GM10248 (cell line): ENCODE measurements at regions of chr3 and their contacts with region 1.

Region 1: GRCh38 chr3:79086514-79086913 is 681.3 kb downstream of the ROBO1 start:
- DNase-seq: peak; percentile 29
- CTCF ChIP-seq: peak; percentile 86

Region 2: DNA sequence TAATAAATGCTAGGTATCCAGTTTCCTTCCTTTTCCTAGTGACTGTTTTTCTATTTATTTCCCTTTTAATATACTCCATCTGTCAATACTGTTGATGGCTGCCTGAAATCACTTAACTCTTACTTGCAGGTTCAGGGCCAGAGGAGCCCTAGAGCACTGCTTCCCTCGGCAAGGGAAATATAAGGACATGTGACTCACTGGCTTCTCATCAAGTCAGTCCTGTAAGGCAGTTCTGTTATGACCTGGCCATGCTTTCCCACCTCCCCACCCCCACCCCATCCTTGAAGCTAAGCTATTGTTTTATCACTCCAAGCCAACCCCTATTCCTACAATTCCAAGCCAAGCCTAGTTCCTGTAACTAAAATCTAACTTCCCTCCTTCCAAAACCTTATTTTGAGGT is 119.5 kb before region 1 on chr3:
- CTCF ChIA-PET with region 1: no interaction called
- POLR2A ChIA-PET with region 1: no interaction called
- DNase-seq: no peak
- CTCF ChIP-seq: no peak

Region 3: GRCh38 chr3:79097964-79098660 is 11.6 kb after region 1 on chr3:
- CTCF ChIA-PET with region 1: interaction called, 14 read pairs
- POLR2A ChIA-PET with region 1: no interaction called
- DNase-seq: no peak
- CTCF ChIP-seq: no peak

Region 4: DNA sequence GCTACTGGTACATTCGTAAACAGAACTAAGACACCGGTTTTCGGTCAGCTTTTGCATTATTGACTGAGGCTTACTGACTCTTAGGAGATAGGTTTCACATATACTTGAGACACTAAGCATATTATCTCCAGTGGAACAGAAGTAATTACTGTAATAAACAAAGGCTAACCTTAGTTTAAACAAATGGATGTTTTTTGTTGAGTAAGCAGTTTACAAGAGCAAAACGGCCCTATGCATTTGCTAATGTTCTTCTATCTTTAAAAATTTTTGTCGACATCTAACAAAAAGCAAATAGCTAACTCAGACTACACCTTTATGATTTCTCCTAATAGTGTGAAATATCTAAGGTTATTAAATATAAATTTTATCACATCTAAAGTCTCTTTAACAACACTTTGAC is 16.8 kb after region 1 on chr3:
- CTCF ChIA-PET with region 1: interaction called, 14 read pairs
- POLR2A ChIA-PET with region 1: no interaction called
- DNase-seq: no peak
- CTCF ChIP-seq: no peak

Region 5: DNA sequence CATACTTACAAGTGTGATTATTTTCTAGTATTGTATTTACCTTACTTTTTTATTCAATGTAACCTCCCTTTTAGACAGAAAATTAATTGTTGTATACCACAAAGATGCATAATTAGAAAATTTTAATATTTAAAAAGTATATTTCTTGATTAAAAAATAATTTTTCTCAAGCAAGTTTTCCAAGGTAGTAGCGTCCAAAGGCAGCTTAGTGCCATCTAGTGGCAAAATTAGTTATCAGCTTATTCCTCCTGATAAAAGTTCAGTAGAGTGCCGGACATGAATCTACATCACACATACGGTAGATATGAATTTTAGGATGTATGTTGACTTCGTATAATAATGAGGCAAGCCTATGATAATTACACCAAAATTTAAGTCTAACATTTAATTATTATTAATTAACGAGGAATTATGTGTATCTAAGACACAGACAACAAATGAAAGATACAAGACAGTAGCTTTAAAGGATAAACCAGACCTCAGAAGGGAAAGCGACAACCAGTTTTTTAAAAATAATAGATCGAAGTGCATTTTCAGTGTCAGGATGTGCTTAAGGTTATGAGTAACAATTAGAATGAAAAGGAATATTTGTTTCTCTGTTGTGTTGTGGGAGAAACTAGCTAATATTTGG is 275.3 kb after region 1 on chr3:
- CTCF ChIA-PET with region 1: interaction called, 30 read pairs
- POLR2A ChIA-PET with region 1: no interaction called
- DNase-seq: peak; percentile 14
- CTCF ChIP-seq: peak; percentile 71

Region 6: DNA sequence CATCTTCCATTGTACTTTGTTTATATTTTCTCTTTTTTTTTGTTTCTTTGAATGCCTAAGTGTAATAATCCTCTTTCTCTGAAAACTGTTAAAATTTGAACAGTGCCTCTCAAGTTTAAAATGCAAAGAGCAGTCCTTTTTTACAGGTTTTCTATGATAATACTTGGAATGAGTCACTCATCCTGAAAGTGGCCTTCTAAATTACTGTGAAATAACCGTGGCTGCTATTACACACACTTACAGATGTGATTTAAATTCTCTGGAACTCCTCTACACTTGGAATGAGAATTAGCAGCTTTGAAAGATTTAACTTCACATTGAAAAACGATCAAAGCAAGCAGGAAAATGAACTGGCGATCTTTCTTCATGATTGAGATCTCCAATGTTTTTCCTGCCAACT is 575.4 kb after region 1 on chr3:
- CTCF ChIA-PET with region 1: no interaction called
- POLR2A ChIA-PET with region 1: no interaction called
- DNase-seq: no peak
- CTCF ChIP-seq: no peak